Body of pancreas (tissue), 4 donors: ENCODE measurements at regions of chr20 and their contacts with region 1.

Region 1: GRCh38 chr20:50120897-50121693 is 8.1 kb upstream of the UBE2V1 start:
- DNase-seq: peak; percentile 79 to 83 (median 82)
- ATAC-seq: peak; percentile 86
- H3K4me3 ChIP-seq: no peak overlapping the region
- H3K27ac ChIP-seq: peak overlapping the region in 2 of 4 donors; percentile 21 to 25
- H3K4me1 ChIP-seq: peaks cover 15% of the 10 kb centered on the region
- H3K27me3 ChIP-seq: no peaks in the 10 kb centered on the region
- CTCF ChIP-seq: peak; percentile 81 to 97 (median 95)
- POLR2A ChIP-seq: peak in 1 of 3 donors; percentile 13

Region 2: DNA sequence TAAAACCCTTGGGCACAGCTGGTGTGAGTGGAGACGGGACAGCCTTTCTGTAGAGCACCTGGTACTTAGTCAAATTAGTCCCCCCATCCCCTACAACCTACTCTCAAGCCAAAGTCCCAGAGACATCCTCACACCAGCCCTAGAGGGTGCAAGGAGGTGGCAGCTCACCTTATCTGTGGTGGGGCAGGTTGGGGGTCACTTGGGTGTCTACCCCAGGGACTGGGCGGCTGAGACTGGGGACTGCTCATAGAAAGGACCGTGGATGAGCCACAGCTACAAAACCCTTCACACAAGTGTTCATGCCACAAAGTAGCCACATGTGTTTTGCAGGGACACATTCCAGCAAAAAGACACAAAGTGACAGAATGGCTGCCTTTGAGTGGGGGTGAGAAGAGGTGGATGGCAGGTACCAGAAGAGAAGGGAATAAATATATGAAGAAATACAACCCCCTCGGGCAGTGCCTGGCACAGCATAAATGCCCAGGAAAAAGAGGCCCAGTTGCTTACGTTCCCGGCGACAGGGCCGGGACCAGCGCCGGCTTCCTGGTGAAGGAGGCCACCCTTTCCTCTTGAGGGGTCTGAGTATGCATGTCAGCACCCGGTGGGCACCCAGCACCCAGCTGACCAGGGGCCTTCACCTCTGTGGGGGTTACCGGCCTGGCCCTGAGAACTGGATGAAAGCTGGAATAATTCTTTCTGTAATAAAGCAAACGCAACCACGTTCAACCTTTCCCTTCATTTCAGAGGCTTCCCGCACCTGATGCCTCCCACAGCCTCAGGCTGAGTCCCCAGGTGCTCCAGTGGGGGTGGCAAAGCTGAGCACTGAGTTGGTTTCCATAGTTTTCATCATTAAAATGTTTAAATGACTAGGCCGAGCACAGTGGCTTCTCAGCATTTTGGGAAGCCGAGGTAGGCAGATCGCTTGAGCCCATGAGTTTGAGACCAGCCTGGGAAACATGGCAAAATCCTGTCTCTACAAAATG is 55.1 kb after region 1 on chr20:
- intact Hi-C with region 1: loop called (anchors 2 kb)
- DNase-seq: no peak
- ATAC-seq: no peak
- H3K4me3 ChIP-seq: no peak overlapping the region
- H3K27ac ChIP-seq: no peak overlapping the region
- H3K4me1 ChIP-seq: peaks cover 17% of the 10 kb centered on the region
- H3K27me3 ChIP-seq: no peaks in the 10 kb centered on the region
- CTCF ChIP-seq: no peak
- POLR2A ChIP-seq: no peak